A549 (cell line): ENCODE measurements at regions of chr12 and their contacts with region 1.

Region 1: GRCh38 chr12:103868215-103868614 is 27.2 kb upstream of the NT5DC3 start:
- DNase-seq: no peak
- ATAC-seq: no peak
- H3K4me3 ChIP-seq: no peak overlapping the region
- H3K27ac ChIP-seq: no peak overlapping the region; a peak in 1 of 6 replicates
- H3K4me1 ChIP-seq: no peaks in the 10 kb centered on the region
- CTCF ChIP-seq: no peak
- EP300 ChIP-seq: no peak
- POLR2A ChIP-seq: no peak
- RAD21 ChIP-seq: no peak

Region 2: GRCh38 chr12:103762473-103762872 is 105.7 kb before region 1 on chr12:
- CTCF ChIA-PET with region 1: interaction called, 15 read pairs
- POLR2A ChIA-PET with region 1: no interaction called
- DNase-seq: no peak
- ATAC-seq: no peak; a peak in 1 of 6 replicates
- H3K4me3 ChIP-seq: no peak overlapping the region
- H3K27ac ChIP-seq: no peak overlapping the region
- H3K4me1 ChIP-seq: no peaks in the 10 kb centered on the region
- CTCF ChIP-seq: no peak
- EP300 ChIP-seq: no peak
- POLR2A ChIP-seq: no peak
- RAD21 ChIP-seq: no peak

Region 3: DNA sequence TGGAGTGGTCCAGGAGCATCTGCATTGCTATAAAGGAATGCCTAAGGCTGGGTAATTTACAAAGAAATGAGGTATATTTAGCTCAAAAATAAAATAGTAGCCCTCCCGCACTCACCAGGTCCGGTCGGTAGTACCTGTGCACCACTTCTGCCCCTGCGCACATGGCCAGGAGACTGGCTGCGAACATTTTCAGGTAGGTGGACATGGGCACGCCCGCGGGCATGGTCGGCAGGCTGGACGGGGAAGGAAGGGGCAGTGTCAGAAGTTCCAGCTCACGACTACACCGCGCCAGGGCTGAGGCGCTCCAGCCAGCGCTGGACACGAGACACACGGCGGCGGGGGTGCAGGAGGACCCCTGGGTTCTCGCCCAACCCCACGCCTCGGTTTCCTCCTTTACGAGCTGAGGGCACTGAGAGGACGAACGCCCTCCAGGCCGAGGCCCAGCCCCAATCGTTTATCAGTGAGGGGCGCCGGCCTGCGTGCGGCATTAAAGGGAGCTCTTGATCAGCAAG is 88.4 kb after region 1 on chr12:
- CTCF ChIA-PET with region 1: no interaction called
- POLR2A ChIA-PET with region 1: no interaction called
- DNase-seq: no peak
- ATAC-seq: peak; percentile 60 to 70; a peak in 5 of 6 replicates
- H3K4me3 ChIP-seq: peak overlapping the region; percentile 73
- H3K27ac ChIP-seq: peak overlapping the region; percentile 92 to 95
- H3K4me1 ChIP-seq: peaks cover 27% of the 10 kb centered on the region
- CTCF ChIP-seq: no peak
- EP300 ChIP-seq: no peak
- POLR2A ChIP-seq: no peak
- RAD21 ChIP-seq: no peak